ENCODE measurements at regions of chr6 and their contacts with region 1.

Region 1: GRCh38 chr6:89371849-89372505 is 19.5 kb upstream of the UBE2J1 start:
- DNase-seq: peak; percentile 88
- ATAC-seq: peak; percentile 89
- H3K4me3 Mint-ChIP-seq: no peak overlapping the region
- H3K27ac Mint-ChIP-seq: peak overlapping the region; percentile 51
- H3K4me1 Mint-ChIP-seq: peaks cover 23% of the 10 kb centered on the region
- H3K27me3 Mint-ChIP-seq: no peaks in the 10 kb centered on the region

Region 2: DNA sequence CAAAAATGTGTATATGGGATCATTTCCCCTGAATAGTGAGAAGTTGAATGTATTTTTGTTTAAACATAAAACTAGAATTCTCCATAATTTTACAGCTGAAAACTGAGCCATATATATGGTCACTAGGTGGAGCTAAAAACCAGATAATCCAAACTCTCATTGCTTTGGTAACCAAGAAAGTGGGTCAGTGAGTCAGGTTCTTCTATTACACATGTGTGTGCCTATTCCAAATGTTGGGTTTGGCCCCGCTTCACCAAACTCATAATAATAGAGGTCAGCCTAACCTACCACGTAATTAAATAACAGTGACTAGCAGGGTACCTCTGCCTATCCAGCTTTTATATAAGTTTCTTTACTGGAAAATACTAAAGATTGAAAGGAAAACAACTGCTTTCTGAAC is 389.3 kb before region 1 on chr6:
- CTCF ChIA-PET with region 1: interaction called, 13 read pairs
- POLR2A ChIA-PET with region 1: no interaction called
- intact Hi-C with region 1: loop called (anchors 2 to 5 kb)
- DNase-seq: peak; percentile 45
- ATAC-seq: peak; percentile 96
- H3K4me3 Mint-ChIP-seq: no peak overlapping the region
- H3K27ac Mint-ChIP-seq: no peak overlapping the region
- H3K4me1 Mint-ChIP-seq: no peaks in the 10 kb centered on the region
- H3K27me3 Mint-ChIP-seq: peaks cover 3% of the 10 kb centered on the region

Region 3: GRCh38 chr6:89352278-89353117 is 19.5 kb before region 1 on chr6 and contains the start of gene UBE2J1:
- CTCF ChIA-PET with region 1: interaction called, 74 read pairs
- POLR2A ChIA-PET with region 1: no interaction called
- intact Hi-C with region 1: no loop called
- DNase-seq: peak; percentile 85
- ATAC-seq: peak; percentile 84
- H3K4me3 Mint-ChIP-seq: peak within 1 kb of the TSS; percentile 91
- H3K27ac Mint-ChIP-seq: peak within 1 kb of the TSS; percentile 97
- H3K4me1 Mint-ChIP-seq: peaks cover 74% of the 10 kb centered on the region
- H3K27me3 Mint-ChIP-seq: no peaks in the 10 kb centered on the region
- total RNA-seq, gene UBE2J1: 18.7 to 21.7 TPM

Region 4: DNA sequence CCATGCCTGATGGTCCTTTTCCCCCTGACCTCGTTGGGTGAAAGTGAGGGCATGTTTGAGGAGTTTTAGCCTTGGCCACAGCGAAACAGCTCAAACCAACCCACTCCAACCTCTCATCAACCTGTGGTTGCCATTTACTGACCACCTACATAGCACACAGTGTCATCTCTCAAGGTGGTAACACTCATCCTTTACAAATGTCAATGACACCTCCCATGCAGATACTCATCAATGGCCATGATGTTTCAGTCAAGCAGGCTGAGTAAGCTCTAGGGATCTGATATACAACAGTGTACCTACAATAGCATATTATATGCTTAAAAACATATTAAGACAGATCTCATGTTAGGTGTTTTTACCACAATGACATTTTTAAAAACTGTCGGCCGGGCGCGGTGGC is 30.8 kb after region 1 on chr6:
- CTCF ChIA-PET with region 1: interaction called, 10 read pairs
- POLR2A ChIA-PET with region 1: no interaction called
- intact Hi-C with region 1: no loop called
- DNase-seq: no peak
- ATAC-seq: no peak
- H3K4me3 Mint-ChIP-seq: no peak overlapping the region
- H3K27ac Mint-ChIP-seq: no peak overlapping the region
- H3K4me1 Mint-ChIP-seq: no peaks in the 10 kb centered on the region
- H3K27me3 Mint-ChIP-seq: no peaks in the 10 kb centered on the region

Region 5: GRCh38 chr6:89432875-89433251 is 60.9 kb after region 1 on chr6 and contains the start of gene ANKRD6:
- CTCF ChIA-PET with region 1: interaction called, 12 read pairs
- POLR2A ChIA-PET with region 1: no interaction called
- intact Hi-C with region 1: loop called in 1 of 2 experiments (anchors 5 kb)
- DNase-seq: peak; percentile 90
- ATAC-seq: peak; percentile 96
- H3K4me3 Mint-ChIP-seq: peak within 1 kb of the TSS; percentile 67
- H3K27ac Mint-ChIP-seq: no peak within 1 kb of the TSS
- H3K4me1 Mint-ChIP-seq: peaks cover 19% of the 10 kb centered on the region
- H3K27me3 Mint-ChIP-seq: peaks cover 2% of the 10 kb centered on the region
- total RNA-seq, gene ANKRD6: 2.8 to 2.9 TPM

Region 6: GRCh38 chr6:89597988-89598692 is 226.2 kb after region 1 on chr6:
- CTCF ChIA-PET with region 1: interaction called, 4 read pairs
- POLR2A ChIA-PET with region 1: no interaction called
- intact Hi-C with region 1: loop called in 1 of 2 experiments (anchors 5 kb)
- DNase-seq: no peak
- ATAC-seq: no peak
- H3K4me3 Mint-ChIP-seq: no peak overlapping the region
- H3K27ac Mint-ChIP-seq: no peak overlapping the region
- H3K4me1 Mint-ChIP-seq: peaks cover 9% of the 10 kb centered on the region
- H3K27me3 Mint-ChIP-seq: no peaks in the 10 kb centered on the region

Region 7: DNA sequence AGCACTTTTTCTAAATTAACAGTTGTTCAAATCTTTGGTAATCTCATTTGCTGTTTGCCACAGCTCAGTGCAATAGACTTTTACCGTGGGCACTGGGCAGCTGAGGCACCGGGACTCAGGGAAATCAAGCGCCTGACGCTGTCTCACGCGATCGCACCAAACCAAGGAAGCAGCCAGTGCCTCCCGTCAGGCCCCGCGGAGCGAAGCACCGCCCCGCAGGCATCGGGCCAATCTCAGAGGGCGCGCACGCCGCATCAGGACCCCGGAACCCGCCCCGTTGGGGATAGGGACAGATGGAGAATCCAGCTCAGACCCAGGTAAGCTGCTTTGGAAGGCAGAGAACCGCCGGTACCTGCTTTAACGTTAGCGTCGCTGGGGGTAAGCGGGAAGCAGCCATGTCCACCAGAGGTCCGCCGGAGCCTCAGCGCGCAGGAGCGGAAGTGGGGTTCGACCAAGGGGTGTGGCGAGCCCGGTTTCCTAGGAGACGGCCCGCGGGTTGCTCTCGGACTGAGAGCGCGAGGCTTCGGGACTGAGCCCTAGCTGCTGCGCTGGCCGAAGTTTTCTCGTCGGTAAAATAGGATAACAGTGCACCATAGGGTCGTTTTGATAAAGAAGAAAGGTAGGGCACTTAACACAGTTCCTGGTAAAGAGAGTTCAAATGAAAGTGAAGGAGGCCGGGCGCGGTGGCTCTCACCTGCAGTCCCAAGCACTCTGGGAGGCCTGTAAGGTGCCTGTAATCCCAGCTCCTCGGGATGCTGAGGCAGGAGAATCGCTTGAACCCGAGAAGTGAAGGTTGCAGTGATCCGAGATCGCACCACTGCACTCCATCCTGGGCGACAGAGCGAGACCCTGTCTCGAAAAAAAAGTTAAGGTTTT is 266.6 kb after region 1 on chr6 and contains the start of gene LYRM2:
- CTCF ChIA-PET with region 1: interaction called, 5 read pairs
- POLR2A ChIA-PET with region 1: no interaction called
- intact Hi-C with region 1: loop called in 1 of 2 experiments (anchors 1 kb)
- DNase-seq: peak; percentile 96
- ATAC-seq: peak; percentile 97
- H3K4me3 Mint-ChIP-seq: peak within 1 kb of the TSS; percentile 86
- H3K27ac Mint-ChIP-seq: peak within 1 kb of the TSS; percentile 98
- H3K4me1 Mint-ChIP-seq: peaks cover 22% of the 10 kb centered on the region
- H3K27me3 Mint-ChIP-seq: no peaks in the 10 kb centered on the region
- total RNA-seq, gene LYRM2: 24.5 to 27.9 TPM

Region 8: DNA sequence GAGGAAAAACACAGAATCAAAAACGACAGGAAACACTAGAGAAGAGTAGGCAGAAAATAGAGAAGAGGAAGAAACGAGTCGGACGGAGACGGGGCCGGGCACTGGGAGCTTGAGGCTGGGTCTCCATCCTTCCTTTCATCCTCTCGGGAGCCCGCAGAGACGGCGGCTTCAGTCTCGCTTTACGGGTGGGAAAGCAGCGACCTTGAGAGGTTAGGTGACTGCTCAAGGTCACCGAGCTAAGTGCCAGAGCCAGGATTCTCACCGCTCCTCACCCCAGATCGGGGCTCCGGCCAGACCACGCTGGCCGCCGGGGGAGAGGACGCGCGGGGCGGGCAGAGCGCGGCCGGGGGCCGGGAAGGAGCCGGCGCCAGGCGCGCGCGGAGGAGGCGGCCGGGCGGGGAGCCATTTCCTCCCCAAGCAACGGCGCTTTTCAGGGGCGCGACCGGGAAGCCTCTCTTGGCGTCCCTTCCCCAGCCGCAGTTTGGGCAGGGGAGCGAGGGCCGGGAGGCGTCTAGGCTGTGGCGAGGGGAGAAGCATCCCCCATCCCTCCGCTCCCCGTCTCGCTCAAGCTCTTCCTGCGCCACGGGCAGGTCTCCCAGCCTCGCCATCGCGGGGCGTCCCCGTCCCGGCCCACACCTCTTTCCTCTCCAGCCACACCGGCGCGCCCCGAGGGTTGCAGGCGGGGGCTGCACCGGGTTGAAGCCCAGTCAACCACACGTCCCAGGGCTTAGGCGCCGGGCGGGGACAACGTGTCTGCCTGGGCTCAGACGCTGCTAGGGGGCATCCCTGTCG is 1239.0 kb after region 1 on chr6:
- CTCF ChIA-PET with region 1: no interaction called
- POLR2A ChIA-PET with region 1: no interaction called
- intact Hi-C with region 1: no loop called
- DNase-seq: peak; percentile 62
- ATAC-seq: peak; percentile 75
- H3K4me3 Mint-ChIP-seq: peak overlapping the region; percentile 69
- H3K27ac Mint-ChIP-seq: peak overlapping the region; percentile 12
- H3K4me1 Mint-ChIP-seq: peaks cover 9% of the 10 kb centered on the region
- H3K27me3 Mint-ChIP-seq: peaks cover 54% of the 10 kb centered on the region